ENCODE measurements at regions of chrX and their contacts with region 1.

Region 1: DNA sequence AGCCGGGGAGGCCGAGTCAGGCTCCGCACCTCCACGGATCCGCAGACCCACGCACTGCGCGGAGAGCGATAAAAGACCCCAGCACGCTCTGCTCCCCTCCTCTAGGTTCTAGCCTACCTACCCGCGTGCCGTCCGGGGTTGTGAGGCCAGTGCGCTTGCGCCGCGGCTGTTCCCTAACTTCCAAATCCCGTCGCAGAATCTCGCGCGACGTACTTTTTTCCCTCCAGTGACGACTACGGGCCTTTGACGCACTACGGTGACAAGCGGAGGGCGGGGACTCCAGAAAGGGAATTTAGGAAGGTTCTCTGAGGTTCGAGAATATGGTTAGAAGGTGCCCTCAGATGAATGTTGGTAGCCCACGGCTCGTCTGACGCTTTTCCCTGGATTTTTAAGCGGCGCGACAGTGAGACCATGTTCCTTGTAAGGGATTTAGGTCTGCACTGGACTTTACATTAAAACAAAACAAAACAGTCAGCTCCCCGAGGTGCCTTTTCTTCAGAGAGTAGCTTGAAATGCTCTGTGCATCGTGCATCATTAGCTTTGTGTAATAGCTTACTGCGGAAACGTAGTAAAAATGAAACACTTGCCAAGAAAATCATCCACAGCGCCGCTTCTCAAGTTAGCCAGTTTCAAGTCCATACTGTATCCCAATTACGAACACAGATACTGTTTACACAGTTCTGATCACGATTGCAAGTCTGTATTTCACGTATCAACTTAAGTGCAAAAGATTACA is at the start of gene NKRF:
- DNase-seq: peak; percentile 82 to 96
- ATAC-seq: peak; percentile 80 to 89 (median 83)
- H3K4me3 ChIP-seq: peak within 1 kb of the TSS; percentile 70
- H3K4me3 Mint-ChIP-seq: peak within 1 kb of the TSS; percentile 95
- H3K27ac ChIP-seq: peak within 1 kb of the TSS; percentile 98
- H3K27ac Mint-ChIP-seq: peak within 1 kb of the TSS; percentile 95 to 96
- H3K4me1 ChIP-seq: peaks cover 16% of the 10 kb centered on the region
- H3K4me1 Mint-ChIP-seq: peaks cover 21 to 25% of the 10 kb centered on the region in 2 donors
- H3K27me3 ChIP-seq: no peaks in the 10 kb centered on the region
- H3K27me3 Mint-ChIP-seq: no peaks in the 10 kb centered on the region
- CTCF ChIP-seq: no peak
- total RNA-seq, gene NKRF: 6.7 to 9.2 (median 6.9) TPM

Region 2: GRCh38 chrX:119669424-119670037 is 63.1 kb after region 1 on chrX:
- intact Hi-C with region 1: no loop called
- DNase-seq: no peak
- ATAC-seq: no peak
- H3K4me3 ChIP-seq: no peak overlapping the region
- H3K4me3 Mint-ChIP-seq: no peak overlapping the region
- H3K27ac ChIP-seq: no peak overlapping the region
- H3K27ac Mint-ChIP-seq: peak overlapping the region; percentile 33 to 50
- H3K4me1 ChIP-seq: peaks cover 12% of the 10 kb centered on the region
- H3K4me1 Mint-ChIP-seq: peaks cover 18 to 24% of the 10 kb centered on the region in 2 donors
- H3K27me3 ChIP-seq: no peaks in the 10 kb centered on the region
- H3K27me3 Mint-ChIP-seq: no peaks in the 10 kb centered on the region
- CTCF ChIP-seq: no peak

Region 3: DNA sequence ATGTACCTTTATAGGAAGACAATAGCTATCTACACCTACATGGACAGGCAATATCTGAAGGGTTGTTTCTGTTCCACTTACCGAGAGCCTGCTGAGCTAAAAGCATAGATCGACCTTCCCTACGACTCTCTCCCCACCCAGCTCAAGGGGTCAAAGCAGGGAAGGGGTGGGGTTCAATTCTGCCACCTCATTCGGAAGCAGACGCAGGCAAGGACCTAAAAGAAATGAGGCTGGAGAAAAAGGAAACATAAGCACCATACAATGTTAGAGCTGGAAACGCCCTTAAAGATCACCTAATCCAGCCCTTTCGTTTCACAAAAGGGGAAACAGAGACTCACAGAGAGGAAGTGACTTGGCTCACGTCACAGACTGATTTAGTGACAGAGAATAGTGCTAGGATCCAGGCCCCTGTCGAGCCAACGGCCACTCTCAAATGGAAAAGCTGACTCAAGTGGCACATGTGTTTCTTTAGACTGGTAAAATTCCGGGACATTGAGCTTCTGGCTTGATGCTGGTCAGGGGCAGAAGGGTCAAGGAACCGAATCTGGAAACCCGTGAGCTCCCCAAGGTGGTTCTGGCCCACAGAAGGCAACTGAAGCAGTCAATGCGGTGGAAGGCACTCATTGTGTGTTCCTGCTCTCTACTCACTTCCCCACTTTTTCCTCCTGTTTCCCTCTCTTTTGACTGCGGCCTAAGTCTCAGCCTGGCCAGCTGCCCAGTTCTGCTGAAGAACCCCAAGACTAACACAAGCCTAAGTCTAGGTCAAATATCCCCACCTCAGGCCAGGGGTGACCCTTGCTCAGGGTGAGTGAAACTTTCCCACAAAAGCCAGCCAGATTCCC is 79.0 kb after region 1 on chrX:
- intact Hi-C with region 1: loop called (anchors 10 kb)
- DNase-seq: peak in 1 of 2 donors; percentile 75
- ATAC-seq: peak; percentile 32 to 73 (median 35)
- H3K4me3 ChIP-seq: peak overlapping the region; percentile 5
- H3K4me3 Mint-ChIP-seq: peak overlapping the region; percentile 82
- H3K27ac ChIP-seq: peak overlapping the region; percentile 100
- H3K27ac Mint-ChIP-seq: peak overlapping the region; percentile 96 to 98
- H3K4me1 ChIP-seq: peaks cover 94% of the 10 kb centered on the region
- H3K4me1 Mint-ChIP-seq: peaks cover 67 to 87% of the 10 kb centered on the region in 2 donors
- H3K27me3 ChIP-seq: no peaks in the 10 kb centered on the region
- H3K27me3 Mint-ChIP-seq: no peaks in the 10 kb centered on the region
- CTCF ChIP-seq: no peak